ENCODE measurements at regions of chr3 and their contacts with region 1.

Region 1: GRCh38 chr3:50627407-50628051 is 10.6 kb downstream of the MAPKAPK3 start:
- DNase-seq: peak; percentile 46
- CTCF ChIP-seq: peak; percentile 59

Region 2: GRCh38 chr3:50388016-50388719 is 239.4 kb before region 1 on chr3:
- CTCF ChIA-PET with region 1: no interaction called
- POLR2A ChIA-PET with region 1: no interaction called
- DNase-seq: no peak
- CTCF ChIP-seq: peak; percentile 8

Region 3: GRCh38 chr3:50591196-50591741 is 36.3 kb before region 1 on chr3:
- CTCF ChIA-PET with region 1: no interaction called
- POLR2A ChIA-PET with region 1: no interaction called
- DNase-seq: no peak
- CTCF ChIP-seq: no peak

Region 4: GRCh38 chr3:50652709-50653108 is 25.2 kb after region 1 on chr3:
- CTCF ChIA-PET with region 1: interaction called, 45 read pairs
- POLR2A ChIA-PET with region 1: interaction called, 3 read pairs
- DNase-seq: peak; percentile 66
- CTCF ChIP-seq: peak; percentile 64

Region 5: GRCh38 chr3:50830451-50830850 is 202.9 kb after region 1 on chr3:
- CTCF ChIA-PET with region 1: no interaction called
- POLR2A ChIA-PET with region 1: no interaction called
- DNase-seq: no peak
- CTCF ChIP-seq: no peak

Measured in GM10248 (cell line).